Activated CD4-positive, alpha-beta T cell treated with anti-CD3 and anti-CD28 coated beads for 36 hours (primary cell): ENCODE measurements at regions of chr10 and their contacts with region 1.

Region 1: GRCh38 chr10:73743905-73744663 is at the start of gene SEC24C:
- DNase-seq: peak; percentile 98
- ATAC-seq: peak; percentile 87
- H3K4me3 Mint-ChIP-seq: peak within 1 kb of the TSS; percentile 95
- H3K27ac Mint-ChIP-seq: peak within 1 kb of the TSS; percentile 100
- H3K4me1 Mint-ChIP-seq: peaks cover 42% of the 10 kb centered on the region
- H3K27me3 Mint-ChIP-seq: no peaks in the 10 kb centered on the region
- total RNA-seq, gene SEC24C: 84.6 to 88.2 TPM

Region 2: DNA sequence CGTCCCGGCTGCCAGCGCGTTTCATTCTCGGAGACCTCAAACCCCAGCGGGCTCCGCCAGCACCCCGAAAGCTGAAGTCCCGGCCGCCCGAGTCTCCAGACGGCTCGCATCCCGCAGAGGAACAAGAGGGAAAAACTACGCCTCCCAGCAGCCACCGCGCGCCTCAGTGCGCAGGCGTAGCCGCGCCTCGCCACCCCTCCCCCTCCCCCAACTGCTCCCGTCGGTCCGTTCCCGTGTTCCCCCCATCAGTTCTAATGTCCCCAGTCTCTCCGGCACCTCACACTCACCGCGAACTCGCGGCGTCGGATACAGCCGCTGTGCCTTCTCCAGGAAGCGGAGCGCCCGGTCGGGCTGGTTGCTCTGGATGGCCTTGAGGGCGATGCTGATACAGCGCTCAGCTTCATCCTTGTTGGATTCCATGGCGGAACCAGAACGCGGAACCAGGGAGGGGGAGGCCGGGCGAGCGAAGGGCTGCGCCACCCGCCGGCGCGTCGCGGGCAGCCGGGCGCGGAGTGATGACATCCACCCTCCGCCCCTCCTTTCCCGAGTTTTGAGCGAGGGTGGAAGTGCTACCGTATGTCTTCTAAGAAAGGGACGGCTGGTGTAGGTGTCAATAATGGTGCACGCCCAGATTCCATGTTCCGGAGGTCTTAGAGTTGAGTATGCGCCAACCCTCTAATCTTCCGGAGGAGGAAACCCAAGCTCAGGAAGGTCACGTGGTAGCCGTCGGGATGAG is 1389.4 kb before region 1 on chr10 and contains the start of gene DNAJB12:
- CTCF ChIA-PET with region 1: no interaction called
- POLR2A ChIA-PET with region 1: no interaction called
- intact Hi-C with region 1: loop called in 1 of 2 experiments (anchors 10 kb)
- DNase-seq: peak; percentile 93
- ATAC-seq: peak; percentile 83
- H3K4me3 Mint-ChIP-seq: peak within 1 kb of the TSS; percentile 82
- H3K27ac Mint-ChIP-seq: peak within 1 kb of the TSS; percentile 98
- H3K4me1 Mint-ChIP-seq: peaks cover 35% of the 10 kb centered on the region
- H3K27me3 Mint-ChIP-seq: no peaks in the 10 kb centered on the region
- total RNA-seq, gene DNAJB12: 19.7 to 21.9 TPM

Region 3: DNA sequence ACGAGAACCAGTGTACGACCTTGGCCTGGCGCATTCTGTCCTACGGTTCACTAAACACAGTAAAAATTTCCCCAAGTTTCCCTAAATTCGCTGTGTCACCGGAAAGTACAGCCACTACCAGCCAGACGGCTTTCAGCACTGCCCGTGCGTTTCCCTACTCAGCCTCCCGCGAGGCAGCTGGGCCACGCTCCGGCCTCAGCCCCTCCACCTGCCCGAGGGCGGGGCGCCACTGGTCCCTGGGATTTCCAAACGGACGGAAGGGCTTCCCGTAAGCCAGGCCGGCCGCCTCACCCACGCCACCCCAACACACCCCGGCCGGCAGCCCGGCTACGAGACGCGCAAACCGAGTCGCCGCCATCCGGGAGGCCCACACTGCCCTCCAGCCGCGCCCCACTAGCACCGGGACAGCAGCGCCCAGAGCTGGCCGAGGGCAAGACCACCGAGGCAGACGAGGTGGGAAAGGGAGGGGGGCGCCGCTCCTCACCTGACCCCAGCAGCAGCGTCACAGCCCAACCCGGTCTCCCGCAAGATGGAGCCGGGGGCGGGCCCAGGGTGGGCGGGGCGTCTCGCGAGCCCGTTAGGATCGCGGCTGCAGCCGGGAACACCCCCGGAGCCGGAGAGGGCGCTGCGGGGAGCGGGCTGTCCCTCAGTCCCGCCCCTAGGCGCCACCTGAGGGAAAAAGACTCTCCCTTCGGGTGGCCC is 330.4 kb before region 1 on chr10 and contains the start of gene ANXA7:
- CTCF ChIA-PET with region 1: no interaction called
- POLR2A ChIA-PET with region 1: no interaction called
- intact Hi-C with region 1: loop called in 1 of 2 experiments (anchors 5 kb)
- DNase-seq: peak; percentile 97
- ATAC-seq: peak; percentile 96
- H3K4me3 Mint-ChIP-seq: peak within 1 kb of the TSS; percentile 94
- H3K27ac Mint-ChIP-seq: peak within 1 kb of the TSS; percentile 93
- H3K4me1 Mint-ChIP-seq: peaks cover 52% of the 10 kb centered on the region
- H3K27me3 Mint-ChIP-seq: peaks cover 3% of the 10 kb centered on the region
- total RNA-seq, gene ANXA7: 94.6 to 118 TPM

Region 4: DNA sequence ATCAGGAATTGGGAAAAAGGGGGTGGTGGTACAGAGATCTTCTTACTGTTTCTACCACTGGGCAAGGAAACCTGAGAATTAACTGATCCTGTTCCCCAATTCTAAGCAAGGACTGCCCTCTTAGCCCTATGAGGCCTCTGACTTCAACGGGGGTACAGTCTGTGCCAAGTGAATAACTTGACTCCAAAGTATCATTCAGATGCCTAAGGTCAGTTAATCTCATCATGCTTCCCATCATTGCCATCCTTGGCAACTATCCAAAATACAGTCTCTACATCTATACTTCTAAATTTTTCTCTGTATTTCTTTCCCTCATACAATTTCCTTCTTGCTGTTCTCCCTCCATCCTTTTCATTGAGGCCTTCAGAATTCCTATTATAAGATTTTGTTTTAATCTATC is 258.8 kb before region 1 on chr10:
- CTCF ChIA-PET with region 1: no interaction called
- POLR2A ChIA-PET with region 1: no interaction called
- intact Hi-C with region 1: no loop called
- DNase-seq: no peak
- ATAC-seq: no peak
- H3K4me3 Mint-ChIP-seq: no peak overlapping the region
- H3K27ac Mint-ChIP-seq: no peak overlapping the region
- H3K4me1 Mint-ChIP-seq: peaks cover 29% of the 10 kb centered on the region
- H3K27me3 Mint-ChIP-seq: no peaks in the 10 kb centered on the region

Region 5: DNA sequence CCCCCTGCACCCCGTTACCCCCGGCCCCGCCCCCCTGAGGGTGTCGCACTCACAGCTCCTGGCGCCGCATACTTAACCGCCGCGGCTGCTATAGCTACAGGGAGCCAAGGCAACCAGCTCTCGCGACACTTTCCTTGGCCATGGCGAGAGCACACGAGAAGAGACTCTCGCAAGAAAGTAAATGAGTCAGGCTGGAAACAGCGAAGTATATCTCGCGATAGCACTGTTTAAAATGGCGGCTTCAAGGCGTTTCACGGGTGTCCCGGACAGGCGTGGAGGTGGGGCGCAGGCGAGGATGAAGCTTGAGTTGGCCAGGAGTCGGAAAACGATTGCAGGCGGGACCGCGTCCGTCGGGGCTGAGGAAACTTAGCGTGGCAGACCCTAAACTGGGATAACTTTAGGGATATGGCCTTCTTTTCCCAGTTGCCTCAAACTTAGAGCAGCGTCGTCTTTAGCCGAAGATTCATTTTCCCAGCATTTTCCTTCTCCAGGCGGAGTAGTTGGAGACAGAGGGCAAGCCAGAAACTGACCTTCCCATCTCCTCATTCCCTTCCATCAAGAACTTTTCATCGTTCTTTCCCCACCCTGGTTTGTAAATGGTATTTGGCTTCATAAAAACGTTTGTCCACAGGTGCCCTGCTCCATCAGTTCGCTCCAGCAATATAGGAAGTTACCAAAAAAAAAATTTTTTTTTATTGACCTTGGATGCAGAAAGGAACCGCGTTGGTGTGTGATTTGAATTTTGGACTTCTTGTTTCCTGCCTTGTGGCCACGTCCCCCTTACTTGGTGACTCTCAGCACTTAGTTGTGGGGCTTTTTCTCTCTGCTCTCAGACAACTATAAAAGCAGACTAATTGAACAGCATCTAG is 118.0 kb before region 1 on chr10:
- CTCF ChIA-PET with region 1: no interaction called
- POLR2A ChIA-PET with region 1: interaction called, 10 read pairs
- intact Hi-C with region 1: loop called in 1 of 2 experiments (anchors 1 kb)
- DNase-seq: peak; percentile 97
- ATAC-seq: peak; percentile 99
- H3K4me3 Mint-ChIP-seq: peak overlapping the region; percentile 96
- H3K27ac Mint-ChIP-seq: peak overlapping the region; percentile 98
- H3K4me1 Mint-ChIP-seq: peaks cover 19% of the 10 kb centered on the region
- H3K27me3 Mint-ChIP-seq: no peaks in the 10 kb centered on the region

Region 6: GRCh38 chr10:73772280-73773151 is 28.4 kb after region 1 on chr10:
- CTCF ChIA-PET with region 1: interaction called, 3 read pairs
- POLR2A ChIA-PET with region 1: interaction called, 8 read pairs
- intact Hi-C with region 1: loop called (anchors 1 kb)
- DNase-seq: peak; percentile 89
- ATAC-seq: peak; percentile 75
- H3K4me3 Mint-ChIP-seq: peak overlapping the region; percentile 86
- H3K27ac Mint-ChIP-seq: peak overlapping the region; percentile 91
- H3K4me1 Mint-ChIP-seq: peaks cover 53% of the 10 kb centered on the region
- H3K27me3 Mint-ChIP-seq: no peaks in the 10 kb centered on the region

Region 7: GRCh38 chr10:73810735-73811465 is 66.8 kb after region 1 on chr10:
- CTCF ChIA-PET with region 1: interaction called, 3 read pairs
- POLR2A ChIA-PET with region 1: interaction called, 4 read pairs
- intact Hi-C with region 1: loop called in 1 of 2 experiments (anchors 1 kb)
- DNase-seq: peak; percentile 72
- ATAC-seq: peak; percentile 22
- H3K4me3 Mint-ChIP-seq: peak overlapping the region; percentile 78
- H3K27ac Mint-ChIP-seq: peak overlapping the region; percentile 91
- H3K4me1 Mint-ChIP-seq: peaks cover 42% of the 10 kb centered on the region
- H3K27me3 Mint-ChIP-seq: no peaks in the 10 kb centered on the region

Region 8: GRCh38 chr10:73997787-73998622 is 253.9 kb after region 1 on chr10 and contains the start of gene VCL:
- CTCF ChIA-PET with region 1: no interaction called
- POLR2A ChIA-PET with region 1: no interaction called
- intact Hi-C with region 1: loop called in 1 of 2 experiments (anchors 1 kb)
- DNase-seq: peak; percentile 97
- ATAC-seq: peak; percentile 98
- H3K4me3 Mint-ChIP-seq: peak within 1 kb of the TSS; percentile 89
- H3K27ac Mint-ChIP-seq: peak within 1 kb of the TSS; percentile 97
- H3K4me1 Mint-ChIP-seq: peaks cover 39% of the 10 kb centered on the region
- H3K27me3 Mint-ChIP-seq: no peaks in the 10 kb centered on the region
- total RNA-seq, gene VCL: 20.7 to 22.7 TPM

Region 9: DNA sequence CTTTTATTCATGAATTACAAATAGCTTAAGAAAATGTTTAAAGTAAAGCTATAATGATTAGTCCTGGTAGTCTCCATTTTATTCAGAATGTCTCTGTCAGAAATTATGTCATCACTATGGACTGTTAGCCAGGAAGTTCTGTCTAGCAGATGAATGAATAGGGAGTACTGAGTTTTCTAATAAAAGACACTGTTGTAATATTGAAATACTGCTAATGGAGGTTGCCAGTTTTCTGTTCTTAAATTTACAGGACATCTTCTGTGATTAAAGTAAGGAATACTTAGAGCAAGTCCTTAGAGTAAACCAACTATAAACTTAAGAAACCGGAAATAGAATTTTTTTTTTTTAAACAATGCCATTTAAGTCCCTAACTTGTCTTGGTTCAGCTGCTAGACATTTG is 716.7 kb after region 1 on chr10:
- CTCF ChIA-PET with region 1: no interaction called
- POLR2A ChIA-PET with region 1: no interaction called
- intact Hi-C with region 1: no loop called
- DNase-seq: no peak
- ATAC-seq: no peak
- H3K4me3 Mint-ChIP-seq: no peak overlapping the region
- H3K27ac Mint-ChIP-seq: no peak overlapping the region
- H3K4me1 Mint-ChIP-seq: peaks cover 2% of the 10 kb centered on the region
- H3K27me3 Mint-ChIP-seq: no peaks in the 10 kb centered on the region